ENCODE measurements at regions of chr7 and their contacts with region 1.

Region 1: DNA sequence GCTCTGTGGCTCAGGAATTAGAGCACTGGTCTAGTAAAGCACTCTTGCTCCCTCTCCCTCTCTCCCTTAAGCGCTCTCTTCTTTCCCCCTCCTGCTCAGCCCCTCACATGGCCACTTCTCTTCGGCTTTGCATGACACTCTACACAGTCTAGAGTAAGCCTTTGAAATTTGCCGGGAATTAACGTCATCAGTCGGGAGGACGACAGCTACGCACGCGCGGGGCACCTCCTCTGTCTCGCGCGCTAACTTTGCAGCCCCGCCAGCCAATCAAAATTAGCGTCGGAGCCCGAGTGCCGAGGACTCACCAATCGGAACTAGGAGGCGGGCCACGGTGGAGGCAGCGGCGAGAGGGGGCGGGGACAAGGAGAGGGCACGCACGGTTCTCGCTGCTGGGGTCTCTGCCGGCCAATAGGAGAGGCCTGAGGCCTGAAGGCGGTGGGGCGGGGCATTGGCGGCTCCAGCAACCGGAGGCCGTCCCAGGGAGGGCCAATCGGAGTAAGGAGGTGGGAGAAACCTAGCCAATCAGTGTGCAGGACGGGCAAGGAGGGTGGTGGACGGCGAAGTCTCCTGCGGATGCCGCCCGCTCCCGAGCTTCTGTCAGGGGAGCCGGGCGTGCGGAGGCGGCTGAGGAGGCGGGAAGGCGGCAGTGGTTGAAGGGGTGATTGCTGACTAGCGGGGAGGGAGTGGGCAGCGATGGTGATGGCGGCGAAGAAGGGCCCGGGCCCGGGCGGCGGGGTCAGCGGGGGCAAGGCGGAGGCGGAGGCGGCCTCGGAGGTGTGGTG is at the start of gene AGFG2:
- DNase-seq: peak; percentile 100
- ATAC-seq: peak; percentile 100
- H3K4me3 ChIP-seq: peak within 1 kb of the TSS; percentile 40 to 99 (median 90)
- H3K27ac ChIP-seq: peak within 1 kb of the TSS in 10 of 12 donors; percentile 55 to 85 (median 72)
- H3K4me1 ChIP-seq: peaks cover 0 to 32% (median 13%) of the 10 kb centered on the region in 12 donors
- H3K27me3 ChIP-seq: no peaks in the 10 kb centered on the region
- CTCF ChIP-seq: no peak
- POLR2A ChIP-seq: peak in 1 of 2 donors; percentile 80
- total RNA-seq, gene AGFG2: 24.1 to 36.9 (median 32.8) TPM

Region 2: GRCh38 chr7:100428199-100428966 is 110.5 kb before region 1 on chr7 and contains the start of gene ZCWPW1:
- intact Hi-C with region 1: no loop called
- DNase-seq: peak; percentile 95 to 98 (median 97)
- ATAC-seq: peak; percentile 60 to 77 (median 70)
- H3K4me3 ChIP-seq: peak within 1 kb of the TSS; percentile 66 to 99 (median 90)
- H3K27ac ChIP-seq: peak within 1 kb of the TSS; percentile 96 to 100 (median 99)
- H3K4me1 ChIP-seq: peaks cover 0 to 40% (median 30%) of the 10 kb centered on the region in 12 donors
- H3K27me3 ChIP-seq: no peaks in the 10 kb centered on the region
- CTCF ChIP-seq: peak in 2 of 12 donors; percentile 15 to 34
- POLR2A ChIP-seq: peak; percentile 98 to 100
- total RNA-seq, gene ZCWPW1: 2.8 to 6.2 (median 3.7) TPM

Region 3: DNA sequence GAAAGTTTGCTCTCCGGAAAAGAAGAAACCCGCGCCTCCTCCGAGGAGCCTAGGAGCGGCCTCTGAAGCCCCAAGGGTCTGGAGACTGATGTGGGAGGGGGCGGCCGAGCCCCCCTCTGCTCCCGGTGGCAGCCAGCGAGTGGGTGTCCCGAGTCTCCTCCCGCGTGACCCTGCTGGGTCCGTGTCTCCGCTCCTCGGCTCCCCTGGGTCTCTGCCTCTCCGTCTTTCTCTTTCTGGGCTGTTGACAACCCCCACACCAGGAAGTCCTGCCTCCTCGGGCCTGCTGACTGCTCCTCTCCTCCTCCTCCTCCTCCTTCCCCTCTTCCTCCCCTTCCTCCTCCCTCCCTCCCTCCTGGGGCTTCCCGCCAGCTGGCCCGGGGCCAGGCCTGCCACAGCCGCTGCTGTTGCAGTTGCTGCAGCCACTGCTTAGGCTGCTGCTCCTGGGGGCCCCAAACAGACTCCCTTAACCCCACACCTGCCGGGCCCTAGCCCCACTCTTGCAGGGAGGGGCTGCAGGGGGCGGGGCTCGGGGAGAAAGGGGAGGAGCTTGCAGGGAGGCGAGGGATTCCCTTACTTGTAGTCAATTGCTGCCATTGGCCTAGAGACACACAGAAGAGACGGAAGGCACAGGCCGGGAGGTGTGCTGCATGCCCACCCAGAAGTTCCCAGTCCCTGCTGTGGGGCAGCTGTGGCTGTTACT is 59.7 kb before region 1 on chr7 and contains the start of gene TSC22D4:
- intact Hi-C with region 1: loop called in 3 of 10 experiments (anchors 2 to 5 kb)
- DNase-seq: peak; percentile 95 to 98 (median 95)
- ATAC-seq: peak; percentile 82 to 92 (median 92)
- H3K4me3 ChIP-seq: peak within 1 kb of the TSS; percentile 66 to 100 (median 98)
- H3K27ac ChIP-seq: peak within 1 kb of the TSS; percentile 81 to 99 (median 96)
- H3K4me1 ChIP-seq: peaks cover 0 to 62% (median 42%) of the 10 kb centered on the region in 12 donors
- H3K27me3 ChIP-seq: no peaks in the 10 kb centered on the region
- CTCF ChIP-seq: peak in 1 of 12 donors; percentile 10
- POLR2A ChIP-seq: peak; percentile 57 to 88
- total RNA-seq, gene TSC22D4: 41.8 to 55.5 (median 49.0) TPM

Region 4: GRCh38 chr7:100489824-100490223 is 49.0 kb before region 1 on chr7:
- intact Hi-C with region 1: loop called in 1 of 10 experiments (anchors 5 kb)
- DNase-seq: peak in 3 of 5 donors; percentile 32 to 44 (median 36)
- ATAC-seq: peak in 1 of 4 donors; percentile 37
- H3K4me3 ChIP-seq: no peak overlapping the region
- H3K27ac ChIP-seq: no peak overlapping the region
- H3K4me1 ChIP-seq: peaks cover 0 to 22% (median 9%) of the 10 kb centered on the region in 12 donors
- H3K27me3 ChIP-seq: peaks cover 0 to 9% (median 0%) of the 10 kb centered on the region in 9 donors
- CTCF ChIP-seq: no peak
- POLR2A ChIP-seq: no peak

Region 5: DNA sequence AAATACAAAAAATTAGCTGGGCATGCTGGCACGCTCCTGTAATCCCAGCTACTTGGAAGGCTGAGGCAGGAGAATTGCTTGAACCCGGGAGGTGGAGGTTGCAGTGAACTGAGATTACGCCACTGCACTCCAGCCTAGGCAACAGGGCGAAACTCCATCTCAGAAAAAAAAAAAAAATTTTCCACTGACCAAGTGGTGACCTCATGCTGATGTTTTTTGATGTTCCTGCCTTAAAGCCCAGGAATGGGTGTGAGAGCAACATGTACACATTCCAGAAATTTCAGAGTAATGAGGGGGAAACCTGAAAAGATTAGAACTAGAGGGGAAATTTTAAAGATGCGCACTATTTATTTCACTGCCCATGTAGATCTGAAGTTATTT is 35.5 kb before region 1 on chr7:
- intact Hi-C with region 1: no loop called
- DNase-seq: no peak
- ATAC-seq: no peak
- H3K4me3 ChIP-seq: no peak overlapping the region
- H3K27ac ChIP-seq: no peak overlapping the region
- H3K4me1 ChIP-seq: no peaks in the 10 kb centered on the region
- H3K27me3 ChIP-seq: peaks cover 0 to 3% (median 0%) of the 10 kb centered on the region in 9 donors
- CTCF ChIP-seq: no peak
- POLR2A ChIP-seq: no peak

Region 6: DNA sequence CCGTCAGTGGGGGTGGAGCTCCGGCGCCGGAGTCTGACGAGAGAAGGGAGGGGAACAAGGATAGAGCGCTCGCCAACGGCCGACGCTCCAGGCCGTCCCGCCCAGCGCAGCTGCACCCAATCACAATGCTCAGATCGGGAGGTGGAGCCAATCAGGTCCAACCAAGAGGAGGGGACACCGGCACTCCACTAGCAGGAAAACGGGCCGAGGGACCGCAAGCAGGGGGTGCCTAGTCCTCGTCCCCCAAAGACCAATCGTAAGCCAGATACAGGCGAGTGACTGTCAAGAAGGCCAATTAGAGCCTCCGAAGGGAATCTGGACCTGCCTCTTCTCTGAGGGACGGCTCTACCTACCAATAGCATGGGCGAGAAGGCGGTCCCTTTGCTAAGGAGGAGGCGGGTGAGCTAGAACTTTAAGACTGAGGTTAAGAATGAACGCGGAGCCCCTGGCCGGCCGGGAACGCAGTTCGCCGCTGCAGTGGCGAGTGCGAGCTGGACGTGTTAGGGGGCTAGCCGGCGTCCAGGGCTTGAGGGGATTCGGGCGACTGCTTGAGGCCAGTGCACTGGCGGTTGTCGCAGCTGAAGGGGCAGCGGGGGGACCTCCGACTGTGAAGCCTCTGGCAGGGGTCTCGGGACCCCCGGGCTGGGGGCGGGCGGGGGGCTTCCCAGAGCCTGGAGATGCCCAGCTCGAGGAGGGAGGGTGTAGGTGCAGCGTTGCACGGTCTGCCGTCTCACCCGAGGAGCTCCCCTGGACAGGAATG is 47.6 kb after region 1 on chr7 and contains the start of gene FBXO24:
- intact Hi-C with region 1: loop called in 1 of 10 experiments (anchors 2 kb)
- DNase-seq: peak; percentile 100
- ATAC-seq: peak; percentile 91 to 97 (median 96)
- H3K4me3 ChIP-seq: peak within 1 kb of the TSS; percentile 75 to 100 (median 96)
- H3K27ac ChIP-seq: peak within 1 kb of the TSS; percentile 79 to 99 (median 96)
- H3K4me1 ChIP-seq: peaks cover 6 to 63% (median 41%) of the 10 kb centered on the region in 12 donors
- H3K27me3 ChIP-seq: no peaks in the 10 kb centered on the region
- CTCF ChIP-seq: no peak
- POLR2A ChIP-seq: peak in 1 of 2 donors; percentile 48
- total RNA-seq, gene FBXO24: 0.11 to 0.75 (median 0.48) TPM in 6 of 9 donors, not detected in the others

Region 7: GRCh38 chr7:100599911-100600729 is 61.3 kb after region 1 on chr7:
- intact Hi-C with region 1: no loop called
- DNase-seq: no peak
- ATAC-seq: no peak
- H3K4me3 ChIP-seq: no peak overlapping the region
- H3K27ac ChIP-seq: no peak overlapping the region
- H3K4me1 ChIP-seq: peaks cover 0 to 24% (median 6%) of the 10 kb centered on the region in 12 donors
- H3K27me3 ChIP-seq: no peaks in the 10 kb centered on the region
- CTCF ChIP-seq: no peak
- POLR2A ChIP-seq: no peak

Region 8: GRCh38 chr7:100611974-100612729 is 73.3 kb after region 1 on chr7 and contains the start of gene MOSPD3:
- intact Hi-C with region 1: loop called in 1 of 10 experiments (anchors 2 kb)
- DNase-seq: peak; percentile 98 to 99 (median 98)
- ATAC-seq: peak; percentile 96 to 98 (median 98)
- H3K4me3 ChIP-seq: peak within 1 kb of the TSS; percentile 54 to 90 (median 76)
- H3K27ac ChIP-seq: peak within 1 kb of the TSS; percentile 75 to 98 (median 94)
- H3K4me1 ChIP-seq: peaks cover 0 to 24% (median 12%) of the 10 kb centered on the region in 12 donors
- H3K27me3 ChIP-seq: no peaks in the 10 kb centered on the region
- CTCF ChIP-seq: no peak
- POLR2A ChIP-seq: peak; percentile 53 to 58
- total RNA-seq, gene MOSPD3: 6.7 to 13.8 (median 10.4) TPM

Region 9: GRCh38 chr7:100803398-100804233 is 264.8 kb after region 1 on chr7:
- intact Hi-C with region 1: no loop called
- DNase-seq: peak; percentile 70 to 90 (median 82)
- ATAC-seq: peak; percentile 77 to 92 (median 88)
- H3K4me3 ChIP-seq: peak overlapping the region in 6 of 12 donors; percentile 1 to 41 (median 6)
- H3K27ac ChIP-seq: peak overlapping the region; percentile 3 to 73 (median 44)
- H3K4me1 ChIP-seq: peaks cover 5 to 56% (median 25%) of the 10 kb centered on the region in 12 donors
- H3K27me3 ChIP-seq: no peaks in the 10 kb centered on the region
- CTCF ChIP-seq: no peak
- POLR2A ChIP-seq: no peak

Measured in heart left ventricle (tissue), 16 donors.